Activated CD4-positive, alpha-beta T cell treated with anti-CD3 and anti-CD28 coated beads for 36 hours (primary cell): ENCODE measurements at regions of chr1 and their contacts with region 1.

Region 1: DNA sequence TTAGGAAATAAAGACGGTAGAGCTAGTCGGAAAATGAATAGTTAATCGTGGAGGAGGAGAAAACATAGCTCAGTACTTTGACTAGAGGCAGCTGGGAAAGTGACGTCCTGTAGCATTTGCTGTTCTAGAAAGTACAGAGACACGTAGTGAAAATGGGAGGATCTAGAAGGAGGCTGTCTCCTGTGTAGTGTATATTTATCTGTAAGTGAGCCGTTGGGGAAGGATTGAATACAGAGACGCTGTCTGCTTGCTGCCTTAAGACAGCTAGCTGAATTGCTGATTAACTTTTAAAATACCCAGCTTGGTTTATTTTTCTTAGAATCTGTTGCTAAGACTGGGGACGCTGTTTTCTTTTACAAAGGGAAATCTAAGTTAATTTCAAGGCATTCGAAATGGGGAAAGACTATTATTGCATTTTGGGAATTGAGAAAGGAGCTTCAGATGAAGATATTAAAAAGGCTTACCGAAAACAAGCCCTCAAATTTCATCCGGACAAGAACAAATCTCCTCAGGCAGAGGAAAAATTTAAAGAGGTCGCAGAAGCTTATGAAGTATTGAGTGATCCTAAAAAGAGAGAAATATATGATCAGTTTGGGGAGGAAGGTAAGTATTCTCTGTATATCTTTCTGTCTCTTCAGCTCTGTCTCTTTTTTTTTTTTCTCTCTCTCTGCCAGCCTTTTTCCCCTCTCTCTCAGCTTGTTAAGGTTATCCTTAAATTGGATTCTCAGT is at the start of gene DNAJB4:
- DNase-seq: peak; percentile 75
- ATAC-seq: peak; percentile 99
- H3K4me3 Mint-ChIP-seq: peak within 1 kb of the TSS; percentile 91
- H3K27ac Mint-ChIP-seq: peak within 1 kb of the TSS; percentile 99
- H3K4me1 Mint-ChIP-seq: peaks cover 41% of the 10 kb centered on the region
- H3K27me3 Mint-ChIP-seq: no peaks in the 10 kb centered on the region
- total RNA-seq, gene DNAJB4: 8.8 to 9.8 TPM

Region 2: DNA sequence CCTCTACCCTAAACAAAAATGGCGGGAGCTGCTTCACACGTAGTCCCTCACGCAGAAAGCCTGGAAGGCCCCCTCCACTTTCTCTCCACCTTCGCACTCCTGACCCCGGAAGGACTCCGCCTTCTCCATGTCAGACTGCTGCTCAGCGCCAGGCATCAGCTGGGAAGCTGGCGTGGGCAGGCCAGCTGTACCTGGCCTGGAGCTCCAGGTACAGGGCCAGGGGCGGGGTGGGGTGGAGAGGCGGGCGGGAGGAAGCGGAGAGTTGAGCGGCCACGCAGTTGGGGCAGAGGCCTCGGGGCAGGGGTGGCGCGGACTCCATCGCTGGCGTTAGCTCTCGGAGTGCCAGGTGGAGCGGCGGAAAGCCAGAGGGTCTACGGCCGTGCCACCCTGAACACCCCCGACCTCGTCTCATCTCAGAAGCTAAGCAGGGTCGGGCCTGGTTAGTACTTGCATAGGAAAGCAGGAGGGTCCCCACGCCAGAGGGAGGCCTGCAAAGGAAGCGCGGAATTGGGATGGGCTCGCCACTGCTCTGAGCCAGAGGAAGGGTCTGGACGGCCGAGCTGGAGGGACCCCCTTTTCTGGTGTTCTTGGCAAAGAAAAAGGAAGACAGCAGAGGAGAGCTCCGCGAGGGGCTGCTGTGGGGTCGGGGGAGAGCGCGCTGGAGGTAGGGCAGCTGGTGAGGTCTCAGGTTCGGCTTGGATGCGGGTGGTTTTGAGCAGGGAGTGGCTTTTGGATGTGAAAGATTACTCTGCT is 225.2 kb before region 1 on chr1 and contains the start of gene MIGA1:
- CTCF ChIA-PET with region 1: no interaction called
- POLR2A ChIA-PET with region 1: interaction called, 4 read pairs
- intact Hi-C with region 1: loop called in 1 of 2 experiments (anchors 1 kb)
- DNase-seq: peak; percentile 91
- ATAC-seq: peak; percentile 96
- H3K4me3 Mint-ChIP-seq: peak within 1 kb of the TSS; percentile 91
- H3K27ac Mint-ChIP-seq: peak within 1 kb of the TSS; percentile 93
- H3K4me1 Mint-ChIP-seq: peaks cover 34% of the 10 kb centered on the region
- H3K27me3 Mint-ChIP-seq: no peaks in the 10 kb centered on the region
- total RNA-seq, gene MIGA1: 7.2 to 9.0 TPM

Region 3: DNA sequence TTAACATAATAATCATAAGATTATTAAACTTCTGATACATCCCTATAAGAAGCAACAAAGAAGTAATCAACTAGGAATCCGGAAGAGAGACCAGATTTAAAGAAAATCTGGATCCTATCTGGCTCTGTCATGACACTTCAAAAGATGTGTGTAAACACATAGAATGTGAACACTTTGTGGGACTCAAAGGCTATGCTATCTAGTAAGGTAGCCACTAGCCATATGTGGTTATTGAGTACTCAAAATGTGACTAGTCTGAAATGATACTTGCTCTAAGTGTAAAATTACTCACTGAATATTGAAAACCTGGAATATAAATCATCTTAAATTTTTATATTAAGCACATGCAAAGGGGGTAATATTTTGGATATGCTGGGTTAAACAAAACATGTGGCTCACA is 34.7 kb before region 1 on chr1:
- CTCF ChIA-PET with region 1: interaction called, 11 read pairs
- POLR2A ChIA-PET with region 1: interaction called, 297 read pairs
- intact Hi-C with region 1: no loop called
- DNase-seq: no peak
- ATAC-seq: no peak
- H3K4me3 Mint-ChIP-seq: no peak overlapping the region
- H3K27ac Mint-ChIP-seq: no peak overlapping the region
- H3K4me1 Mint-ChIP-seq: peaks cover 63% of the 10 kb centered on the region
- H3K27me3 Mint-ChIP-seq: no peaks in the 10 kb centered on the region

Region 4: GRCh38 chr1:77994117-77994705 is 10.7 kb before region 1 on chr1:
- CTCF ChIA-PET with region 1: interaction called, 4 read pairs
- POLR2A ChIA-PET with region 1: interaction called, 21 read pairs
- intact Hi-C with region 1: no loop called
- DNase-seq: no peak
- ATAC-seq: no peak
- H3K4me3 Mint-ChIP-seq: no peak overlapping the region
- H3K27ac Mint-ChIP-seq: no peak overlapping the region
- H3K4me1 Mint-ChIP-seq: peaks cover 17% of the 10 kb centered on the region
- H3K27me3 Mint-ChIP-seq: no peaks in the 10 kb centered on the region

Region 5: DNA sequence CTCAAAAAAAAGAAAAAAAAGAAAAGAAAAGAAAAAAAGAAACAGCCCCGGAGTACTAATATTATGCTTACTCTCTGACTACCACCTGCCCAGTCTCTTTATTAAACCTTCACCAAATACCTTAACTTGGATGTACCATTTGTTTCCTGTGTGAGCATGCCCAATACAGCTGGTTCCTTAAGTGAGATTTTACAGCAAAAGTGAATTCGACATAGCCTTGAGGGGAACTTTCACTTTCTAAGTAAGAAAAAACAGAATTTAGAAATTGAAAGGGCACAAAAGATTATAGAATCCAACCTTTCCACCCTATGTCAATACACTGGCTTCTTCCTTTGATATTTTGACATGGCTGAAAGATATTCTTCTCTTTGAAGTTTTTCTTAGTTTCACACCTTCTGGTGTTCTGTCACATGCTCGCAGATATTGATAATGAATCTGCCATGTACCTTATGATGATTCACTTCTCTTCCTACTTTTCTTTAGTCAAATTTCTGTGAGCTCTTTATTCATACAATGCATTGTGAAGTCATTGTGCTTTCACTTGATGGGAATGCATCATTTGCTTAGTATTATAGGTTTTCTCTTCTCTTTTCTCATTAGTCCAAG is 35.7 kb after region 1 on chr1:
- CTCF ChIA-PET with region 1: interaction called, 4 read pairs
- POLR2A ChIA-PET with region 1: interaction called, 21 read pairs
- intact Hi-C with region 1: loop called (anchors 1 to 2 kb)
- DNase-seq: no peak
- ATAC-seq: peak; percentile 89
- H3K4me3 Mint-ChIP-seq: peak overlapping the region; percentile 49
- H3K27ac Mint-ChIP-seq: peak overlapping the region; percentile 79
- H3K4me1 Mint-ChIP-seq: peaks cover 23% of the 10 kb centered on the region
- H3K27me3 Mint-ChIP-seq: peaks cover 12% of the 10 kb centered on the region

Region 6: GRCh38 chr1:78045926-78046778 is 41.3 kb after region 1 on chr1 and contains the start of gene GIPC2:
- CTCF ChIA-PET with region 1: interaction called, 3 read pairs
- POLR2A ChIA-PET with region 1: interaction called, 21 read pairs
- intact Hi-C with region 1: loop called in 1 of 2 experiments (anchors 2 kb)
- DNase-seq: peak; percentile 62
- ATAC-seq: peak; percentile 72
- H3K4me3 Mint-ChIP-seq: peak within 1 kb of the TSS; percentile 66
- H3K27ac Mint-ChIP-seq: no peak within 1 kb of the TSS
- H3K4me1 Mint-ChIP-seq: peaks cover 29% of the 10 kb centered on the region
- H3K27me3 Mint-ChIP-seq: peaks cover 33% of the 10 kb centered on the region
- total RNA-seq, gene GIPC2: 0.05 to 0.09 TPM

Region 7: GRCh38 chr1:78419309-78419708 is 414.4 kb after region 1 on chr1:
- CTCF ChIA-PET with region 1: no interaction called
- POLR2A ChIA-PET with region 1: no interaction called
- intact Hi-C with region 1: no loop called
- DNase-seq: no peak
- ATAC-seq: no peak
- H3K4me3 Mint-ChIP-seq: no peak overlapping the region
- H3K27ac Mint-ChIP-seq: no peak overlapping the region
- H3K4me1 Mint-ChIP-seq: no peaks in the 10 kb centered on the region
- H3K27me3 Mint-ChIP-seq: no peaks in the 10 kb centered on the region